Ovary (tissue), 10 donors: ENCODE measurements at regions of chr15 and their contacts with region 1.

Region 1: DNA sequence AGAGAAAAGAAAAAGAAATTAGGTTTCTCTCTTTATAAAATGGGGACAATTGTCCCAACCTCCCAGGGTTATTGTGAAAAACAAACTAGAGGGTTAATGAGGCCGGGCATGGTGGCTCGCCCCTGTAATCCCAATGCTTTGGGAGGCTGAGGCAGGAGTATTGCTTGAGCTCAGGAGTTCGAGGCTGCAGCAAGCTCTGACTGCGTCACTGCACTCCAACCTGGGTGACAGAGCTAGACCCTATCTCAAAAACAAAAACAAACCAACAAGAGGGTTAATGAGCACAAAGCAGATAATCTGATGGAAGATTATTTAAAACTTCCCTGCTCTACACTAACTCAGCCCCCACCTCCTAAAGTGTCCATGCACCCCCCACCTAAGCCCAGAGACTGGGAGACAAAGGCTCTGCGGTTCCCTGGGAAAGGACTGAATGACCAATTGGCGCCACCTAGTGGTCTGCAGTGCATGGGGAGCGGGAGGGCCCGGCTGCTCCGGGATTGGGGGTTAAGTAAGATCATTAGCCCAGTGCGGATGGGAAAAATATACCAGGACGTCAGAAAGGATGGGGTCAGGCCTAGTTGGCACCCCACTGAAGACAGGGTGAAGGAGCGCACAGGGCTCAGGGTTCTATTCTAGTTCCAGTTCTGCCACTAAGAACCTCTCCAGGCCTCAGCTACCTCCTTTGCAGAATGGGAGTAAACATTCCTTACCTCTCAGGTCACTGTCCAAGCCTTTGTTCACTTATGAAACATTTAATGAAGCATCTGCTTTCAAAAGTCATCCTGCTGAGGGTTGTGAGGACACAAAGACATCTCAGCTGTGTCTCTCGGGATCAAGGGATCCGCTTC is 15.6 kb downstream of the PIF1 start:
- DNase-seq: peak; percentile 83 to 91 (median 90)
- H3K4me3 ChIP-seq: no peak overlapping the region
- H3K27ac ChIP-seq: no peak overlapping the region
- H3K4me1 ChIP-seq: peaks cover 4% of the 10 kb centered on the region
- H3K27me3 ChIP-seq: no peaks in the 10 kb centered on the region
- CTCF ChIP-seq: peak; percentile 66 to 87 (median 86)
- EP300 ChIP-seq: no peak
- POLR2A ChIP-seq: no peak

Region 2: GRCh38 chr15:64430000-64430735 is 379.7 kb before region 1 on chr15:
- intact Hi-C with region 1: loop called in 1 of 4 experiments (anchors 10 kb)
- DNase-seq: peak; percentile 48 to 71 (median 57)
- H3K4me3 ChIP-seq: no peak overlapping the region
- H3K27ac ChIP-seq: peak overlapping the region in 1 of 2 donors; percentile 72
- H3K4me1 ChIP-seq: peaks cover 3% of the 10 kb centered on the region
- H3K27me3 ChIP-seq: no peaks in the 10 kb centered on the region
- CTCF ChIP-seq: no peak
- EP300 ChIP-seq: no peak
- POLR2A ChIP-seq: no peak

Region 3: GRCh38 chr15:64681424-64682024 is 128.3 kb before region 1 on chr15:
- intact Hi-C with region 1: loop called in 2 of 4 experiments (anchors 5 to 10 kb)
- DNase-seq: peak in 1 of 5 donors; percentile 48
- H3K4me3 ChIP-seq: no peak overlapping the region
- H3K27ac ChIP-seq: no peak overlapping the region
- H3K4me1 ChIP-seq: peaks cover 4% of the 10 kb centered on the region
- H3K27me3 ChIP-seq: no peaks in the 10 kb centered on the region
- CTCF ChIP-seq: peak in 2 of 3 donors; percentile 60 to 65
- EP300 ChIP-seq: no peak
- POLR2A ChIP-seq: no peak

Region 4: GRCh38 chr15:64740311-64741170 is 69.3 kb before region 1 on chr15:
- intact Hi-C with region 1: loop called in 2 of 4 experiments (anchors 2 to 5 kb)
- DNase-seq: peak in 4 of 5 donors; percentile 67 to 86 (median 79)
- H3K4me3 ChIP-seq: no peak overlapping the region
- H3K27ac ChIP-seq: peak overlapping the region in 1 of 2 donors; percentile 60
- H3K4me1 ChIP-seq: peaks cover 15% of the 10 kb centered on the region
- H3K27me3 ChIP-seq: no peaks in the 10 kb centered on the region
- CTCF ChIP-seq: peak in 2 of 3 donors; percentile 31 to 44
- EP300 ChIP-seq: no peak
- POLR2A ChIP-seq: no peak